ENCODE measurements at regions of chr11 and their contacts with region 1.

Region 1: DNA sequence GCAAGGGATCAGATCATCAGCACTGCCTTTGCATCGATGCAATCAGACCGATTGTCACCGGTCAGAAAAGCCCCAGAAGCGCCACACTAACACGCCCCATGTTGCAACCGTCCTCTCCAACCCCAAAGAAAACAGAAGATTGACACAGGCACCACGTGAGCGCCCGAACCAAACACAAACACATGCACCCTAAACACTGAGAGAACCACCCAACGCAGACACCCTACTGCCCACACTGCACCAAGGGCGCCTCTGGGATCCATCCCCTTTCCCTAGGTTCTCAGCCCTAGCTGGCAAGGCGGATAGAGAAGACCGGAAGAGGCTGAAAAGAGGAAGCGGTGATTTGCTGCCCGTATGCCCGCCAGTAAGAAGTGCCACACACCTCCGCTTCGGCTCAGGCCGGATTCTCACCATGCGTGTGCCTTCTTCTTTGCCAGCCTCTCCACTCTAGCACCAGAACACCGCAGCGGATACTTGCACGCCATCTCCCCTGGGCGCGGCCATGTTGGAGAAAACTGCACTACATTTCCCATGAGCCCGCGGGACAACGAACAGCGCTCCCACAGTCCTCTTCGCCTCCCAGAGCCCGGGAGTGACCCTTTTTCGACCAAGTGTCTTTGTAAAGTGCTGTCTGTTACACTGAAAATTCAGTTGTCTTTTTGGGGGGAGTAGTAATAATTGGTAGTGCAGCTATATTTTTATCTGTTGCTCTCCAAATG is at the start of gene ALKBH8:
- DNase-seq: peak; percentile 62 to 90 (median 72)
- ATAC-seq: peak; percentile 95
- H3K4me3 ChIP-seq: peak within 1 kb of the TSS; percentile 70
- H3K4me3 Mint-ChIP-seq: peak within 1 kb of the TSS; percentile 91
- H3K27ac ChIP-seq: peak within 1 kb of the TSS; percentile 57 to 69
- H3K27ac Mint-ChIP-seq: peak within 1 kb of the TSS; percentile 85
- H3K4me1 ChIP-seq: peaks cover 16% of the 10 kb centered on the region
- H3K4me1 Mint-ChIP-seq: peaks cover 56% of the 10 kb centered on the region
- H3K27me3 ChIP-seq: no peaks in the 10 kb centered on the region
- H3K27me3 Mint-ChIP-seq: no peaks in the 10 kb centered on the region
- CTCF ChIP-seq: no peak
- total RNA-seq, gene ALKBH8: 6.5 to 7.7 TPM

Region 2: GRCh38 chr11:107457558-107458271 is 107.7 kb before region 1 on chr11 and contains the start of gene CWF19L2:
- CTCF ChIA-PET with region 1: no interaction called
- POLR2A ChIA-PET with region 1: interaction called, 8 read pairs
- intact Hi-C with region 1: loop called in 1 of 2 experiments (anchors 2 kb)
- DNase-seq: peak; percentile 74 to 97 (median 86)
- ATAC-seq: peak; percentile 92
- H3K4me3 ChIP-seq: peak within 1 kb of the TSS; percentile 92
- H3K4me3 Mint-ChIP-seq: peak within 1 kb of the TSS; percentile 91
- H3K27ac ChIP-seq: peak within 1 kb of the TSS; percentile 73 to 79
- H3K27ac Mint-ChIP-seq: peak within 1 kb of the TSS; percentile 82
- H3K4me1 ChIP-seq: peaks cover 7% of the 10 kb centered on the region
- H3K4me1 Mint-ChIP-seq: peaks cover 37% of the 10 kb centered on the region
- H3K27me3 ChIP-seq: no peaks in the 10 kb centered on the region
- H3K27me3 Mint-ChIP-seq: peaks cover 5% of the 10 kb centered on the region
- CTCF ChIP-seq: no peak
- total RNA-seq, gene CWF19L2: 21.2 to 21.8 TPM

Region 3: GRCh38 chr11:107549253-107549953 is 16.0 kb before region 1 on chr11:
- CTCF ChIA-PET with region 1: interaction called, 7 read pairs
- POLR2A ChIA-PET with region 1: interaction called, 3 read pairs
- intact Hi-C with region 1: loop called in 1 of 2 experiments (anchors 1 kb)
- DNase-seq: peak in 7 of 14 experiments; percentile 4 to 69 (median 36)
- ATAC-seq: peak; percentile 67
- H3K4me3 ChIP-seq: no peak overlapping the region
- H3K4me3 Mint-ChIP-seq: no peak overlapping the region
- H3K27ac ChIP-seq: no peak overlapping the region
- H3K27ac Mint-ChIP-seq: no peak overlapping the region
- H3K4me1 ChIP-seq: no peaks in the 10 kb centered on the region
- H3K4me1 Mint-ChIP-seq: peaks cover 4% of the 10 kb centered on the region
- H3K27me3 ChIP-seq: no peaks in the 10 kb centered on the region
- H3K27me3 Mint-ChIP-seq: no peaks in the 10 kb centered on the region
- CTCF ChIP-seq: peak; percentile 92

Region 4: DNA sequence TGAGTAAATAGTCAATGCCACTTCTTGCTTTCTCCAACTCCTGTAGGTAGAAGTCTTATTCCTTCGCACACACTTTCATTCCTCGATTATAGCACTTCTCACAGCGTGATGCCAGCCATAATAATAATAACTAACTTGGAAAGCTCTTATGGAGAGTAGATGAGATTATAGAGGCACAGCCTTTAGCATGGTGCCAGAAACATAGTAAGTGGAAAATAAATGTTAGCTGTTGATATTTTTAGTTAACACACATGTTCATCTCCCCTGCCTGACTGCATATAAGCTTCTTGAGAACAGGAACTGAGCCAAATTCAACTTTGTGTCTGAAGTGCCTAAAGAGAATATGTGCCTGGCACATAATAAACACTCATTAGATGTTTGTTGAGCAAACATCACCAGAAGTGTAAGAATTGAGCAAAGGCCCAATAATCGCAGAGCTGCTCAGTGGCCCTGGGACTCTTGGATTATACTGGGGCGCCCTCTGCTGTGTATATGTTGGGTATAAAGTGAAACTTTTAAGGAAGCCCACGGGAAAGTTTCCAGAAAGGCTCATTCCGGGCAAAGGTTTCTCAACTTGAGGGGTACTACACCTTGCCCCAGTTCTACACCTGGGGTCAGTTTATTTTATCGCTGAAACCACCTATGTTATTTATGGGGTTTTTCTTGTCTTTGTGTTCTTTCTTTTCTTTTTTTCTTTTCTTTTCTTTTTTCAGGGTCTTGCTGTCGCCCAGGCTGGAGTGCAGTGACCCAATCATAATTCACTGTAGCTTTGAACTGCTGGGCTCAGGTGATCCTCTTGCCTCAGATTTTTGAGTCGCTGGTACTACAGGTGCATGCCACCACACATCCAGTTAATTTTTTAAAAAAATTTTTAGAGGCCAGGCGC is 124.2 kb after region 1 on chr11:
- CTCF ChIA-PET with region 1: interaction called, 9 read pairs
- POLR2A ChIA-PET with region 1: no interaction called
- intact Hi-C with region 1: loop called in 1 of 2 experiments (anchors 1 kb)
- DNase-seq: peak; percentile 13 to 67 (median 42)
- ATAC-seq: peak; percentile 44
- H3K4me3 ChIP-seq: no peak overlapping the region
- H3K4me3 Mint-ChIP-seq: no peak overlapping the region
- H3K27ac ChIP-seq: no peak overlapping the region
- H3K27ac Mint-ChIP-seq: no peak overlapping the region
- H3K4me1 ChIP-seq: no peaks in the 10 kb centered on the region
- H3K4me1 Mint-ChIP-seq: no peaks in the 10 kb centered on the region
- H3K27me3 ChIP-seq: peaks cover 3 to 15% of the 10 kb centered on the region in 2 experiments
- H3K27me3 Mint-ChIP-seq: peaks cover 29% of the 10 kb centered on the region
- CTCF ChIP-seq: peak; percentile 29

Region 5: GRCh38 chr11:107770551-107770951 is 205.2 kb after region 1 on chr11:
- CTCF ChIA-PET with region 1: no interaction called
- POLR2A ChIA-PET with region 1: no interaction called
- intact Hi-C with region 1: loop called (anchors 5 to 10 kb)
- DNase-seq: no peak
- ATAC-seq: no peak
- H3K4me3 ChIP-seq: no peak overlapping the region
- H3K4me3 Mint-ChIP-seq: no peak overlapping the region
- H3K27ac ChIP-seq: no peak overlapping the region
- H3K27ac Mint-ChIP-seq: no peak overlapping the region
- H3K4me1 ChIP-seq: no peaks in the 10 kb centered on the region
- H3K4me1 Mint-ChIP-seq: no peaks in the 10 kb centered on the region
- H3K27me3 ChIP-seq: no peaks in the 10 kb centered on the region
- H3K27me3 Mint-ChIP-seq: peaks cover 8% of the 10 kb centered on the region
- CTCF ChIP-seq: no peak

Region 6: GRCh38 chr11:108093128-108093904 is 527.9 kb after region 1 on chr11:
- CTCF ChIA-PET with region 1: no interaction called
- POLR2A ChIA-PET with region 1: no interaction called
- intact Hi-C with region 1: no loop called
- DNase-seq: no peak
- ATAC-seq: no peak
- H3K4me3 ChIP-seq: no peak overlapping the region
- H3K4me3 Mint-ChIP-seq: no peak overlapping the region
- H3K27ac ChIP-seq: no peak overlapping the region
- H3K27ac Mint-ChIP-seq: peak overlapping the region; percentile 31
- H3K4me1 ChIP-seq: no peaks in the 10 kb centered on the region
- H3K4me1 Mint-ChIP-seq: no peaks in the 10 kb centered on the region
- H3K27me3 ChIP-seq: no peaks in the 10 kb centered on the region
- H3K27me3 Mint-ChIP-seq: no peaks in the 10 kb centered on the region
- CTCF ChIP-seq: no peak

Measured in CD4-positive, alpha-beta T cell (primary cell).